ENCODE measurements at regions of chr17 and their contacts with region 1.

Region 1: GRCh38 chr17:73255671-73256181 is 6.0 kb downstream of the CPSF4L start:
- DNase-seq: no peak
- ATAC-seq: peak; percentile 77
- H3K4me3 ChIP-seq: no peak overlapping the region
- H3K27ac ChIP-seq: no peak overlapping the region
- H3K4me1 ChIP-seq: peaks cover 35% of the 10 kb centered on the region
- H3K27me3 ChIP-seq: no peaks in the 10 kb centered on the region
- CTCF ChIP-seq: peak; percentile 100
- EP300 ChIP-seq: no peak
- POLR2A ChIP-seq: no peak
- RAD21 ChIP-seq: peak; percentile 100

Region 2: DNA sequence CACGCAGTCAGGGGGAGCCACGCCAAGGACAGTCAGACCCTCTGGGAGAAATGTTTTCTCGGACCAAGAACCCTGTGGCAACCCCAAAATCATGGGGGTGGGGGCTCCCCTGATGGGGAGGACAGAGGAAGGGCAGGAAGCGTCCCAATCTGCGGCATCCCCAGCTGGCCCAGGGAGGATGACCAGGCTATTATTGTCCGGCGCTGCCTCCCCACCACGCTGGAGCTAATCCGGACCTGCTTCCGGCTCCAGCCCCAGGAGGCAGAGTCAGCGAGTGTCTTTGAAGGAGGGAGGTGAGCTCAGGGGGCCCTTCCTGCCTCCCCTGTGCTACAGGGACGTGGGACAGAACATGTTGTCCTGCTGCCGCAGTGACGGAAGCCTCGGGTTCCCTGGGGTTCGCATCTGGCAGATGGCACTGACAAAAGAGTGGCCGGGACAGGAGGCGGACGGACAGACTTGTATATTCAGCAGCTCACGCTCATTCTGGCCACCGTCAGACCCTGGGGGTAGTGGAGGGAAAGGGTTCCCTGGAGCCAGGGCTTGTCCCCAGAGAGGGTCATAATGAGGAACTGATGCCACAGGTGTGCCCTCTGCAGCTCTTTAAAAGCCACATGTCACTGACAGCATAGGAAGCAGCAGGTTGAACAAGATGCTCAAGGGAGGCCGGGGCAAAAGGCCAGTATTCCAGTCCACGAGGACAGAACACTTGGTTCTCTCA is 110.3 kb after region 1 on chr17:
- CTCF ChIA-PET with region 1: interaction called, 159 read pairs
- POLR2A ChIA-PET with region 1: interaction called, 11 read pairs
- in situ Hi-C with region 1: loop called (anchors 5 kb)
- intact Hi-C with region 1: loop called (anchors 1 kb)
- DNase-seq: no peak
- ATAC-seq: no peak
- H3K4me3 ChIP-seq: no peak overlapping the region
- H3K27ac ChIP-seq: no peak overlapping the region
- H3K4me1 ChIP-seq: peaks cover 59% of the 10 kb centered on the region
- H3K27me3 ChIP-seq: peaks cover 22 to 82% of the 10 kb centered on the region in 2 experiments
- CTCF ChIP-seq: no peak
- EP300 ChIP-seq: no peak
- POLR2A ChIP-seq: no peak
- RAD21 ChIP-seq: no peak

Region 3: DNA sequence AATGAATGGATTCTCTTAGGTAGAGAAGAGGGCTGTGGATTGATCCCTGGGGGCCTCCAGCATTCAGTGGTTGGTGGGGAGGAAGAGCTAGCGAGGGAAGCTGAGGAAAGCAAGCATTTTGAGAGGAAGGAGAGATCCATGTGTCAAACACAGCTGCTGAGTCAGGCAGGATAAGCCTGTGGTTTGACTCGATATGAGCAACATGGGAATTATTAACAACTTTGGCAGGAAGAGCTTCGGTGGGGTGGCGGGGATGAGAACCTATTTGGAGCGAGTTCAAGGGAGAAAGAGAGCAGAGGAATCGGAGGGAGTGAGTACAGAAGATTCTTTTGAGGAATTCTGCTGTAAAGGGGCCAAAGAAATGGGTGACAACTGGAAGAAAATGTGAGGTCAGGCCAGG is 115.6 kb after region 1 on chr17:
- CTCF ChIA-PET with region 1: interaction called, 159 read pairs
- POLR2A ChIA-PET with region 1: interaction called, 3 read pairs
- in situ Hi-C with region 1: loop called (anchors 5 kb)
- intact Hi-C with region 1: loop called (anchors 1 kb)
- DNase-seq: no peak
- ATAC-seq: no peak
- H3K4me3 ChIP-seq: no peak overlapping the region
- H3K27ac ChIP-seq: no peak overlapping the region
- H3K4me1 ChIP-seq: peaks cover 14% of the 10 kb centered on the region
- H3K27me3 ChIP-seq: peaks cover 7 to 73% of the 10 kb centered on the region in 2 experiments; a peak in 4 of 5 replicates
- CTCF ChIP-seq: no peak
- EP300 ChIP-seq: no peak
- POLR2A ChIP-seq: no peak
- RAD21 ChIP-seq: no peak